Activated naive CD4-positive, alpha-beta T cell treated with anti-CD3 and anti-CD28 coated beads, Interleukin-2, amount 10 ng/mL, durations not matched to agents 7 days and 5 days (primary cell): ENCODE measurements at regions of chr6 and their contacts with region 1.

Region 1: DNA sequence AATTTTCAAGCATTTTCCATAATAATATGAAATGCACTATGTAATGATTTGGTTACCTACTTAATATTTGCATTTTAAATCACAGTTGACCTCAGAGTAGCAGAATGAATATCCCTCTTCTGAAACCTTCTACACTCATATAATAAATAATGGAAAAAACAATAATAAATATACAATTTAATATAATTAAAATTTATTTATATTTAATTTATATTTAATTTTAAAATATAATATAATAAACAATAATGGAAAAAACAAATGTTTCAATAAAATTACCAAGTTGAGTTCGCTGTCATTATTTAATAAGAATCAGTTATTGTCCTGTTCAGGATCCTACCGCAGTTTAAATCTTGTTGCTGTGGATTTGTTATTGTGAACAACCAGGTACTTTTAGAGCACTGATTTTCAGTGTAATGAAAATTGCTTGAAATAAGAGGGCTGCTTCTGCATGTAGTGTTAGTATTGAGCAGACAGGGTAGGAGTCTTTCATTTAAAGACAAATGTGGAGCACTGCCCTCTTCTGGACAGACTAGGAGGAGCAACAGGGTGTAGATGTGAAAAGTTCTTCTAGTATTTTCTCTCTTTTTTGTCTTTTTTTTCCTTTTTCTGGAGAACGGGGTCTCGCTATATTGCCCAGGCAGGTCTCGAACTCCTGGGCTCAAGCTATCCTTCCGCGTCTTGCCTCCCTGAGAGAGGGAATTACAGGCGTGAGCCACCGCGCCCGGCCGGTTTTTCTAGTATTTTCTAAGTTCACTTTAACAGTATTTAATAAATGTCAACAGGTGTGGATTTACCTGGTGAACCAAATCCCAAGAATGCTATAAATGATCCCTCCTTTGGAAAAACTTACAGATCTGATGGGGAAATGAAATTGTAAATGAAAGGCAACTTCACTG is 13.6 kb downstream of the TRAPPC3L start:
- DNase-seq: peak; percentile 76
- H3K4me3 Mint-ChIP-seq: no peak overlapping the region
- H3K27ac Mint-ChIP-seq: no peak overlapping the region
- H3K4me1 Mint-ChIP-seq: no peaks in the 10 kb centered on the region
- H3K27me3 Mint-ChIP-seq: peaks cover 28% of the 10 kb centered on the region

Region 2: GRCh38 chr6:116287689-116288282 is 244.1 kb before region 1 on chr6:
- CTCF ChIA-PET with region 1: interaction called, 30 read pairs
- DNase-seq: no peak
- H3K4me3 Mint-ChIP-seq: no peak overlapping the region
- H3K27ac Mint-ChIP-seq: no peak overlapping the region
- H3K4me1 Mint-ChIP-seq: no peaks in the 10 kb centered on the region
- H3K27me3 Mint-ChIP-seq: no peaks in the 10 kb centered on the region

Region 3: DNA sequence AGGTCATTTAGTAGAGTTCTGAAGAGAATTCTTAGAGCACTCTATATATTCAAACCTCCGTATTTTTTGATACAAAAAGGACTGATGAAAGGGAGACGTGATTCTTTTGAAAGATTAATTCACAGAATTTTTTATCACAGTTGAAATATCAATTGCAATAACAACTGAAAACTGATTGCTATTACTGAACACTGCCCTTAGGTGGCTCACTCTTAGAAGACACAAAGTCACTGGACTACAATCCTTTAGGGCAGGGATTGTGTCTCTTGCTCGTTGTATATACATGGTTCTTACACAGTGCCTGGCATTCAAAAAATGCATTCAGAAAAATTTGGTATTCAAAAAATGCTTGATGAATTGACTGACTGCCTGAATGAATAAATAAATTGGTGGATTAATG is 87.8 kb before region 1 on chr6:
- CTCF ChIA-PET with region 1: interaction called, 15 read pairs
- DNase-seq: no peak
- H3K4me3 Mint-ChIP-seq: no peak overlapping the region
- H3K27ac Mint-ChIP-seq: no peak overlapping the region
- H3K4me1 Mint-ChIP-seq: peaks cover 12% of the 10 kb centered on the region
- H3K27me3 Mint-ChIP-seq: peaks cover 25% of the 10 kb centered on the region

Region 4: DNA sequence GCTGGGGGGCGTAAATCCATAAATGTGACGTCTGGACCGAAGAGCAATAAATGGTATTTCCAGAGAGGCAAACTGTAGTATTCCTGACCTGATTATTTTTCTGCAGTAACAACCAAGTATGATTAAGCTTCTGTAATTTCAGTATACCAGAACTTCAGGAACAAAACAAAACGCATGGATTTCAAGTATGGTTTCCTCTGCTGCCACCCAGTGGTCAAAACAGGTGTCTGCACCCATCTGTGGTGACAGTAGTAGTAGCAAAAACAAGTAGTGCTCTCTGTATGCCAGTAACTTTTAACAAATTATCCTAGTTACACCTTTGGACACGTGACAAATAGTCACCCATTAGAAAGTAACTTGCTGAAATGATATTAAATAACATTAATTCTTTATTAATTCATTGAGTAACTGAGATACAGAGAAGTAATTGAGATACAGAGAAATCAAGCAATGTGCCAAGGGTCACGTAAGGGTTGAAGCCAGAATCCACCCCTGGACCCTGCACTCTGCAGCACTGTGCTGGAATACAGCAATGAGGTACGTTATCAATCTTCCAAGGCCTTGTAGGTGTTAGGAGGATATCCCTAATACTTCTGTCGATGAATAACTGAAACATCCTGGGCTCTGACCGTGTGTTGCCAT is 29.6 kb after region 1 on chr6:
- CTCF ChIA-PET with region 1: interaction called, 38 read pairs
- DNase-seq: peak; percentile 81
- H3K4me3 Mint-ChIP-seq: no peak overlapping the region
- H3K27ac Mint-ChIP-seq: no peak overlapping the region
- H3K4me1 Mint-ChIP-seq: no peaks in the 10 kb centered on the region
- H3K27me3 Mint-ChIP-seq: peaks cover 28% of the 10 kb centered on the region